ENCODE measurements at regions of chr1 and their contacts with region 1.

Region 1: GRCh38 chr1:245142171-245142798 is 12.5 kb upstream of the KIF26B start:
- DNase-seq: no peak
- ATAC-seq: peak; percentile 33; the same call in 1 of the 3 replicates
- H3K4me3 ChIP-seq: no peak overlapping the region
- H3K27ac ChIP-seq: no peak overlapping the region
- H3K4me1 ChIP-seq: no peaks in the 10 kb centered on the region
- H3K27me3 ChIP-seq: peaks cover 34 to 47% of the 10 kb centered on the region in 2 experiments
- CTCF ChIP-seq: no peak
- EP300 ChIP-seq: no peak
- POLR2A ChIP-seq: no peak
- RAD21 ChIP-seq: no peak

Region 2: DNA sequence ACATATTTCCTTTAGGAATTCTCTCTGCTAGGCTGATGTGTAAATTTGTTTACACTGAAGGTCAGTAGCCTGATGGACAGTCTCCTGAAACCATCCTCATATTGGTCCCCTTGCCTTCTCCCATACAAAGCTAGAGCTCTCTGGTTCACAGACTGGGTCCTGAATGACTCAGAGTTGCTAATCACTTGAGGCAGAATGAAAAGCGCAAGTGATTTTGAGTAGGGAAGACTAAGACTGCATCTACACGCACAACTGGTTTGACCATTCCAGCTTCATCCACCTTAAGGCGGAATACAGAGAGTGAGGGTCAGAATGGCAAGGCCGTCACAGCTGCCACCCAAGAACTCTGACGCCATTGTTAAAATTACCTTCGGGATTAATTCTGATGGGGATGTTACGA is 57.7 kb before region 1 on chr1:
- CTCF ChIA-PET with region 1: no interaction called
- POLR2A ChIA-PET with region 1: no interaction called
- in situ Hi-C with region 1: no loop called
- intact Hi-C with region 1: loop called (anchors 5 kb)
- DNase-seq: no peak
- ATAC-seq: no peak
- H3K4me3 ChIP-seq: no peak overlapping the region
- H3K27ac ChIP-seq: no peak overlapping the region
- H3K4me1 ChIP-seq: no peaks in the 10 kb centered on the region
- H3K27me3 ChIP-seq: no peaks in the 10 kb centered on the region
- CTCF ChIP-seq: no peak
- EP300 ChIP-seq: no peak
- POLR2A ChIP-seq: no peak
- RAD21 ChIP-seq: no peak

Measured in K562 (cell line).